SK-N-SH (cell line): ENCODE measurements at regions of chr19 and their contacts with region 1.

Region 1: DNA sequence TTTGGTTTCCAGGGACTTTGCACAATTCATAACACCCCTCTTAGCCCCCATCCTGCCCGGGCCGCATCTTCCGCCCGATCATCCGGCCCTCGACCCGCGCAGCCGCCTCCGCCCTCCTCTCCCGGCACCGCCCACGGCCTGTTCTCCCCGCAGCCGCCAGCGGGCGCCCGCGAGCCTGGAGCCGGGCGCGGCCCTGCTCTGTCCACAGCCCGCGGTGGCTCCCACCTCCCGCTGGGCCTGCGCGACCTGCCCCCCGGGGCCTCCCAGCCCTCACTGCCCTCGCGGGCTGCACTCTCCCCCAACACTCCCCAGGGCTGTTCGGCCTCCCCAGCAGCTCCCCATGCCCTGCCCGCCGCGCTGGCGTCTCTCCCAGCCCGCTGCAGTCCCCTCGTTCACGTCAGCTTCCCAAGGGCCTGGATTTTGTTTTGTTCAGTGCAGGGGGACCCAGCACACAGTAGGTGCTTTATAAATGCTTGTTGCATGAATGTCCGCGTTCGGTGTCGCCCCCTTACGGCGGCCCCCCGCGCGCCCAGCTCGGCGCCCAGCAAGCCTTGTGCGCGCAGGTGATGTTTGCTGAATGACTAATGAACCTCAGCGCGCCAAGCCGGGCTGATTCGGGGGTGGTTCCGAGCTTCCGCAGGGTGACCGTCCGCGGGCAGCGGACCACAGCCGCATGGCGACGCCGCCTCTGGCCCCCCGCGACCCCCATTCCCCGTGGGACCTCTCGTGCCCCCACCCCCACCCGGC is 4.6 kb upstream of the APC2 start:
- DNase-seq: peak; percentile 94
- H3K4me3 ChIP-seq: peak overlapping the region; percentile 64 to 68
- H3K27ac ChIP-seq: peak overlapping the region in 1 of 2 experiments; percentile 60; a peak in 1 of 4 replicates
- H3K4me1 ChIP-seq: peaks cover 3 to 32% of the 10 kb centered on the region in 2 experiments; a peak in 3 of 4 replicates
- H3K27me3 ChIP-seq: no peaks in the 10 kb centered on the region
- CTCF ChIP-seq: peak; percentile 83
- EP300 ChIP-seq: 0 out of 4 replicates have a peak, but pooled peaks of 1 of the 2 experiments have one; percentile 7
- RAD21 ChIP-seq: peak; percentile 56

Region 2: GRCh38 chr19:1275260-1275975 is 169.9 kb before region 1 on chr19 and contains the start of gene FAM174C:
- CTCF ChIA-PET with region 1: interaction called, 12 read pairs
- POLR2A ChIA-PET with region 1: no interaction called
- DNase-seq: peak; percentile 97
- H3K4me3 ChIP-seq: peak within 1 kb of the TSS; percentile 72 to 76
- H3K27ac ChIP-seq: peak within 1 kb of the TSS; percentile 92 to 99
- H3K4me1 ChIP-seq: peaks cover 28 to 42% of the 10 kb centered on the region in 2 experiments; a peak in 1 of 4 replicates
- H3K27me3 ChIP-seq: no peaks in the 10 kb centered on the region
- CTCF ChIP-seq: no peak
- EP300 ChIP-seq: no peak
- RAD21 ChIP-seq: no peak
- polyA plus RNA-seq, gene FAM174C: 53.5 and 78.0 TPM in 2 replicates

Region 3: GRCh38 chr19:1285737-1286360 is 159.5 kb before region 1 on chr19 and contains the start of gene EFNA2:
- CTCF ChIA-PET with region 1: interaction called, 17 read pairs
- POLR2A ChIA-PET with region 1: no interaction called
- DNase-seq: peak; percentile 84
- H3K4me3 ChIP-seq: peak within 1 kb of the TSS; percentile 57 to 63
- H3K27ac ChIP-seq: no peak within 1 kb of the TSS; a peak in 1 of 4 replicates
- H3K4me1 ChIP-seq: peaks cover 0 to 8% of the 10 kb centered on the region in 2 experiments; a peak in 1 of 4 replicates
- H3K27me3 ChIP-seq: no peaks in the 10 kb centered on the region
- CTCF ChIP-seq: peak; percentile 1; the same call in 1 of the 2 replicates
- EP300 ChIP-seq: no peak
- RAD21 ChIP-seq: no peak
- polyA plus RNA-seq, gene EFNA2: 0.67 and 1.1 TPM in 2 replicates

Region 4: GRCh38 chr19:1411255-1412191 is 33.8 kb before region 1 on chr19:
- CTCF ChIA-PET with region 1: interaction called, 13 read pairs
- POLR2A ChIA-PET with region 1: no interaction called
- DNase-seq: no peak
- H3K4me3 ChIP-seq: no peak overlapping the region
- H3K27ac ChIP-seq: no peak overlapping the region; a peak in 1 of 4 replicates
- H3K4me1 ChIP-seq: peaks cover 14 to 28% of the 10 kb centered on the region in 2 experiments; a peak in 3 of 4 replicates
- H3K27me3 ChIP-seq: no peaks in the 10 kb centered on the region
- CTCF ChIP-seq: no peak
- EP300 ChIP-seq: no peak
- RAD21 ChIP-seq: no peak

Region 5: DNA sequence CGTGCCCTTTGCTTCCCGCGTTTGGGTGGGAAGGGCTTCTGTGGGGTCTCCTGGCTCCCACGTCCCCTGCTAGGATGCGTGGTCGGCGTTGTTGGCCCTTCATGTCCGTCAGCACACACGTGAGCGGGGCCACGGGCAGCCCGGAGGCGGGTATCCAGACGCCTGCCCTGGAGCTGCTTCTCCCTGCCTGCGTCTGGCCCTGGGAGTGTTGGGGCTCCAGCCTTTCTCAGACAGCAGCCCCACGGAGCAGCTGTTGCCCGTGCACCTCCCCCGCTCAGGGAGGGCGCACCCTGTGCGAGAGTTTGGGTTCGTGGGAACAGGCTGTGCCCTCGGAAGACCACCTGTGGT is 23.4 kb before region 1 on chr19:
- CTCF ChIA-PET with region 1: interaction called, 12 read pairs
- POLR2A ChIA-PET with region 1: interaction called, 3 read pairs
- DNase-seq: no peak
- H3K4me3 ChIP-seq: no peak overlapping the region
- H3K27ac ChIP-seq: no peak overlapping the region
- H3K4me1 ChIP-seq: no peaks in the 10 kb centered on the region; a peak in 1 of 4 replicates
- H3K27me3 ChIP-seq: no peaks in the 10 kb centered on the region
- CTCF ChIP-seq: no peak
- EP300 ChIP-seq: no peak
- RAD21 ChIP-seq: no peak

Region 6: GRCh38 chr19:1455336-1456120 is 10.2 kb after region 1 on chr19:
- CTCF ChIA-PET with region 1: interaction called, 16 read pairs
- POLR2A ChIA-PET with region 1: interaction called, 5 read pairs
- DNase-seq: peak; percentile 94
- H3K4me3 ChIP-seq: no peak overlapping the region
- H3K27ac ChIP-seq: no peak overlapping the region; a peak in 1 of 4 replicates
- H3K4me1 ChIP-seq: peaks cover 0 to 26% of the 10 kb centered on the region in 2 experiments; a peak in 1 of 4 replicates
- H3K27me3 ChIP-seq: no peaks in the 10 kb centered on the region
- CTCF ChIP-seq: no peak
- EP300 ChIP-seq: no peak
- RAD21 ChIP-seq: no peak

Region 7: GRCh38 chr19:1470203-1471009 is 25.0 kb after region 1 on chr19:
- CTCF ChIA-PET with region 1: interaction called, 21 read pairs
- POLR2A ChIA-PET with region 1: interaction called, 3 read pairs
- DNase-seq: no peak
- H3K4me3 ChIP-seq: no peak overlapping the region
- H3K27ac ChIP-seq: no peak overlapping the region; a peak in 1 of 4 replicates
- H3K4me1 ChIP-seq: peaks cover 0 to 14% of the 10 kb centered on the region in 2 experiments; a peak in 1 of 4 replicates
- H3K27me3 ChIP-seq: no peaks in the 10 kb centered on the region
- CTCF ChIP-seq: no peak
- EP300 ChIP-seq: no peak
- RAD21 ChIP-seq: no peak